SK-N-SH (cell line): ENCODE measurements at regions of chr6 and their contacts with region 1.

Region 1: DNA sequence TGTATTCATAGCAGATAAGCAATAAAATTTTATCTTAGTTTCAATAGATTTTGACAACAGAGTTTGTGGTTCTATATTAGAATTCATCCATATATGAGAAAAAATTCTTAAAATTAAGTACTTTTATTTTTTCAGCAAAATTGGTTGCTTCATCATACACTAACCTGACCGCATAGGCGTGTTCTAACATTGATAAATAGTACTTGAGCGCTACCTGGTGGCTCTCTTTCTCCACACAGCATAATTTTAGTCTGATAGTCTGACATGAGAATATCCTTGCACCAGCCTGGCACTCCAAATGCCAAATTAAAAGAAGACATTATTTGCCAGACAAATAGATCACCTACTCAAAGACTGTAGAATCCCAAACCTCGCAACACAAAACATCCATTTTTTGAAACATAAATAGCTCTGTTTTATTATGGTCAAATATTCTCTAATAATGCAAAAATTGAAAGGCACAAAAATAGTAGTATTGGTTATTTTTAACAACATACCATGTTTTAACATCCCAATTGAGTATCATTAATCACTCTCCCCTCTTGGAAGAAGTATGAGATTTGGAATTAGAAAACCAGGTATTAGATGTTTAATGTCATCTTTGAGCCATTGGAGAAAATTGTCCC is 33.0 kb upstream of the FILIP1 start:
- DNase-seq: peak; percentile 30
- H3K4me3 ChIP-seq: no peak overlapping the region
- H3K27ac ChIP-seq: no peak overlapping the region
- H3K4me1 ChIP-seq: peaks cover 2 to 7% of the 10 kb centered on the region in 2 experiments; a peak in 3 of 4 replicates
- H3K27me3 ChIP-seq: no peaks in the 10 kb centered on the region
- CTCF ChIP-seq: peak; percentile 86
- EP300 ChIP-seq: no peak
- RAD21 ChIP-seq: peak; percentile 93

Region 2: DNA sequence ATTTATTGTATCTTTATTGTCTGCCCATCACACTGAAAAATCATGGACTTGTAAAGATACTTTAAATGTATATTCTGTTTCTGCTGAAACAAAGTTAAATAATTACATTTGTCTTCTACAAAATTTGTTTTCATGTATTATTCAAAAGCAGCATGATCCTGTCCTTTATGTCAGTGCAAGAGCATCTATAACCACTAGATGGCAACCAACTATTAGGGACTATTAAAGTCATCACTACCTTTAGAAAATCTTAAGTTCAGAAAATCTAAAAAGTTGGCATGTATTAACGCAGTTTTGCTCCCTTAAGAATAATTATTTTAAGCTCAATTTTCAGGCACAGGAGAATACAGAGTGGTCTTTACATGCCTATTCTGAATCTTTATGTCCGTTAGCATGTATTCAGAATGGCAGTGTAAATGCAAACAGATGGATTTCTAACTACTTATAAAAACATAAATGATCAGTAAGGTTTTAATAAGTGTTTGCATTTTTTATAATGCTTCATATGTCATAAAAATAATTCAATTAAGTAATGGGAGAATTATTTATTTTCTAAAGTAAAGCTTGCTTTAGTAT is 259.8 kb before region 1 on chr6:
- CTCF ChIA-PET with region 1: interaction called, 20 read pairs
- POLR2A ChIA-PET with region 1: no interaction called
- DNase-seq: peak; percentile 40
- H3K4me3 ChIP-seq: no peak overlapping the region; a peak in 1 of 4 replicates
- H3K27ac ChIP-seq: no peak overlapping the region
- H3K4me1 ChIP-seq: no peaks in the 10 kb centered on the region; a peak in 1 of 4 replicates
- H3K27me3 ChIP-seq: no peaks in the 10 kb centered on the region
- CTCF ChIP-seq: peak; percentile 95
- EP300 ChIP-seq: no peak
- RAD21 ChIP-seq: peak; percentile 79

Region 3: GRCh38 chr6:75296811-75297779 is 229.5 kb before region 1 on chr6:
- CTCF ChIA-PET with region 1: interaction called, 31 read pairs
- POLR2A ChIA-PET with region 1: no interaction called
- DNase-seq: peak; percentile 33
- H3K4me3 ChIP-seq: no peak overlapping the region; a peak in 1 of 4 replicates
- H3K27ac ChIP-seq: no peak overlapping the region
- H3K4me1 ChIP-seq: peaks cover 0 to 2% of the 10 kb centered on the region in 2 experiments; a peak in 2 of 4 replicates
- H3K27me3 ChIP-seq: no peaks in the 10 kb centered on the region
- CTCF ChIP-seq: peak; percentile 84
- EP300 ChIP-seq: no peak
- RAD21 ChIP-seq: peak; percentile 89

Region 4: GRCh38 chr6:75543311-75543710 is 16.7 kb after region 1 on chr6:
- CTCF ChIA-PET with region 1: interaction called, 12 read pairs
- POLR2A ChIA-PET with region 1: no interaction called
- DNase-seq: no peak
- H3K4me3 ChIP-seq: no peak overlapping the region
- H3K27ac ChIP-seq: no peak overlapping the region
- H3K4me1 ChIP-seq: no peaks in the 10 kb centered on the region
- H3K27me3 ChIP-seq: no peaks in the 10 kb centered on the region; the same call in 1 of the 2 replicates
- CTCF ChIP-seq: no peak
- EP300 ChIP-seq: no peak
- RAD21 ChIP-seq: no peak